Esophagus squamous epithelium (tissue), 5 donors: ENCODE measurements at regions of chr1 and their contacts with region 1.

Region 1: DNA sequence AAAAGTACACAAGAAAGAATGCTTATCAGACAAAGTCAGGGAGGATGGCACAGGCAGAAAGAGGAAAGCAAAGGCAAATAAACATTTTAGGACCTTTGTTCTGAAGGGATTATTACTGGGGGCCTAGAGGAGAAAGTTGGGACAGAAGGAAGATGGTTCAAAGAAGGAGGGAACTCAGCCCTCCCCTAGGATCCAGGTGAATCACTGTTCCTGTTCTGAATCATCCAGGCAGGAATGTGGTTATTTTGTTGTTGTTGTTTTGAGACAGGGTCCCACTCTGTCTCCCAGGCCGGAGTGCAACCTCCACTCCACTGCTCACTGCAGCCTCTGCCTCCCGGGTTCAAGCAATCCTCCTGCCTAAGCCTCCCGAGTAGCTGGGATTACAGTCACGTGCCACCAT is 38.5 kb upstream of the PSEN2 start:
- DNase-seq: no peak
- H3K4me3 ChIP-seq: no peak overlapping the region
- H3K27ac ChIP-seq: no peak overlapping the region
- H3K4me1 ChIP-seq: peaks cover 10 to 17% (median 13%) of the 10 kb centered on the region in 3 donors
- H3K27me3 ChIP-seq: no peaks in the 10 kb centered on the region
- CTCF ChIP-seq: no peak
- POLR2A ChIP-seq: no peak

Region 2: GRCh38 chr1:226634166-226634588 is 197.8 kb before region 1 on chr1:
- intact Hi-C with region 1: loop called (anchors 5 kb)
- DNase-seq: no peak
- H3K4me3 ChIP-seq: no peak overlapping the region
- H3K27ac ChIP-seq: peak overlapping the region; percentile 35 to 75 (median 68)
- H3K4me1 ChIP-seq: peaks cover 18 to 70% (median 33%) of the 10 kb centered on the region in 3 donors
- H3K27me3 ChIP-seq: no peaks in the 10 kb centered on the region
- CTCF ChIP-seq: peak; percentile 92 to 97 (median 96)
- POLR2A ChIP-seq: no peak

Region 3: DNA sequence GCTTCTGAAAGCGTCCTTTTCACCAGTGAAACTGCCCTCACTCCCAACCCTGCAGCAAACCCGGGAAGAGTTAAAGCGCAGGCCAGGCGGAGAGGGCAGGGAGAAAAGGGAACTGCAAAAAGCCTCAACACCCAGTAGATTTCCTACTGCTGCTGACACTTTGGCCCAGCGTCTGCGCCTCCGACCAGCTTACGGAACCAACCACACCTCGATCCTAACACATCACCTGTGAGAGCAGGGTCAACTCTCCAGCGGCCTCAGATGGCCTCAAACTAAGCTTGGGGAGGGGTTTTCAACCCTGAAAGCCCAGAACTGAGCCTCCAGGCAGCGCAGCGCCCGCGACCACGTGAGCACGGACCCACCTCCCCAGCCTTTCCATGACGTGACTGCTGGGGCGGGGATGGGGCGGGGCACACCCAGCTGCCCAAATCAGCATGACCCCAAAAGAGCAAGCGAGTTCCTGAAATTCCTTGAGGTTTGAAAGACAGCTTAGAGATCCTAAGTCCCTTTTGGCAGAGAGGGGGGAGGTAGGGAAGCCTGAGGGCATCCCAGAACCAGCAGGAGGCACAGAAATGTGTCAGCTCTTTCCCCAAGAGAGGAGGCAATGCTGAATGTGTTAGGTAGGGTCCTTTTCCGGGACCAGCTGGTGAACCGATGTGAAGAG is 152.0 kb before region 1 on chr1:
- intact Hi-C with region 1: no loop called
- DNase-seq: no peak
- H3K4me3 ChIP-seq: peak overlapping the region; percentile 28 to 62 (median 47)
- H3K27ac ChIP-seq: peak overlapping the region in 3 of 4 donors; percentile 82 to 93 (median 92)
- H3K4me1 ChIP-seq: peaks cover 51 to 99% (median 57%) of the 10 kb centered on the region in 3 donors
- H3K27me3 ChIP-seq: no peaks in the 10 kb centered on the region
- CTCF ChIP-seq: no peak
- POLR2A ChIP-seq: peak in 3 of 4 donors; percentile 38 to 79 (median 49)

Region 4: GRCh38 chr1:227043755-227044154 is 211.8 kb after region 1 on chr1:
- intact Hi-C with region 1: no loop called
- DNase-seq: no peak
- H3K4me3 ChIP-seq: no peak overlapping the region
- H3K27ac ChIP-seq: no peak overlapping the region
- H3K4me1 ChIP-seq: no peaks in the 10 kb centered on the region
- H3K27me3 ChIP-seq: no peaks in the 10 kb centered on the region
- CTCF ChIP-seq: no peak
- POLR2A ChIP-seq: no peak